Sciatic nerve (tissue), 2 donors: ENCODE measurements at regions of chr10 and their contacts with region 1.

Region 1: DNA sequence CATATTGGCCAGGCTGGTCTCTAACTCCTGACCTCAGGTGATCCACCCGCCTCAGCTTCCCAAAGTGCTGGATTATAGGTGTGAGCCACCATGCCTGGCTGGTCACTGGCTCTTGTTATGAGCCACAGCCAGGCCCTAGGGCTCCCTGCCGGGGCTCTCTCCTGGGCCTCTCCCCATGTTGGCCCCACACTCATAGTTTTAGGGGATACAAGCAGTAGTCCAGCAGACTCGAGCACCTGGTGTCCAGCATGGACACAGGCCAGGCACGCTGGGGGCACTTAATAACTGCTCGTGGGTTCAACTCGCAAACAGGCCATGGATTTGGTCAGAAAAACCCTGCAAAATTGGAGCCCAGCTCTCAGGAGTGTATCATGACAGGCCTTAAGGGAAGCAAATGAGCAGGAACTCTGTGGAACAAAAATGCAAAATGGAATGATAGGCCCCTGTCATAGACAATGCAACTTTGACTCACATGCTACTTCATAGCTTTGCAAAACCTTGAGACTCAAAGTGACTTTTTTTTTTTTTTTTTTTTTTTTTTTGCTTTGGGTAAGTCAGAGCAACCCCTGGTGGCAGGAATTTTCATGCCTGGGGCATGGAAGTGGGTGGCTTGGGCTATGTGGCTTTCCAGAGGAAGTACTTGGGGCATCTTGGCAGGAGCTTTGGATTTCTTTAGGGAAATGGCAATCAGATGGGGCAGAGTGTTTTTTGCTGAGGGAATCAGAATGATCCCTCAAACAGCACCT is 62.5 kb downstream of the TACC2 start:
- DNase-seq: peak; percentile 72
- ATAC-seq: peak; percentile 64

Region 2: GRCh38 chr10:122112625-122113160 is 61.3 kb after region 1 on chr10:
- intact Hi-C with region 1: loop called (anchors 10 kb)
- DNase-seq: peak; percentile 86
- ATAC-seq: peak; percentile 87

Region 3: DNA sequence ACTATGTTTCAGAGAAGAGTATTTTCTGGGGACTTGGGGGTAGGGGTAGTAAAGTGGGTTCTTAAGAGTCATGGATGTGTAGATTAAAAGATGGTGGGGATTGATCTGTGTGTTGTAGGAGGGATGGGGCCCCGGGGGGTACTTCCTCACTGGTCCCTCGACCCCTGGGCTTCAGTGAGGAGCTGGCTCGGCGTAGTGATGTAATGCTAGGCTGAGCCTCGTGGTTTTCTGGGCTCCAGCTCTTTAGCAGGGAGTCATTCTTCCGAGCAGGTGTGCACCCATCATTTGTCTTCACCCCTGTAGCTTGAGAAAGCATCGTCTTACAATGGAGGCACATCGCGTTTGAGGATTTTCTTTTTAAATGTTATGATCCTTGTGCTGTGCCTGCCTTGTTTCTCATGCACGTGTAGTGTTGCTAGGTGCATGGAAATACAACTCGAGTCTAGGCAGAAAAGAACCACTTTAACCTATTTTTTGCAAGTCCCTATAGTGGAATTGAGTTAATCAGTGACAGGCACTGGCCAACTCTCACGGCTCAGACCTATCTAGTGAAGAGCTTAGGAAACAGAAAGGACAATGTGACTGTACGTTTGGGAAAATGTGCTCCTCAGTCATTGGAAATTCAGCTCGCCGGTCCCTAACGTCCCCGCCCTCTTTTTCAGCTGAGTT is 113.5 kb after region 1 on chr10:
- intact Hi-C with region 1: no loop called
- DNase-seq: no peak
- ATAC-seq: peak; percentile 25

Region 4: DNA sequence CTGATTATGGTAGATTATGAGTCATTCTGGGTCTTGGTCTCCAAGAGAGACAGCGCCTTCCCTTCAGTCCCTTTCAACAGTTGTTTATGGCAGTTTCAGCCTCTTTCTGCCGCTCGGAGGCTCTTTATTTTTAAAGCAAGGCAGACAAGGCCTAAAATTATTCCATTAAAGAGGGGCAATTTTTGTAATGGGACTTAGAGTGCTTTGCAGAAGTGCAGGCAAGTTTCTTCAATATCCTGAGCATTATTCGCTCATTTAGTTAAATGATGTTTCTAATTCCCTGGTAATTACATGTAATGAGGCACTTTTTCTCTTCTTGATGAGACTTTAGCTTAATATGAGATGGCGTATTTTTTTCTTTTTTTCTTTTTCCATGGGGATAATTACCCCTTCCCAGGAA is 1136.4 kb after region 1 on chr10:
- intact Hi-C with region 1: no loop called
- DNase-seq: no peak
- ATAC-seq: no peak